Right ventricle myocardium inferior (tissue), 1 donor: ENCODE measurements at regions of chr9 and their contacts with region 1.

Region 1: DNA sequence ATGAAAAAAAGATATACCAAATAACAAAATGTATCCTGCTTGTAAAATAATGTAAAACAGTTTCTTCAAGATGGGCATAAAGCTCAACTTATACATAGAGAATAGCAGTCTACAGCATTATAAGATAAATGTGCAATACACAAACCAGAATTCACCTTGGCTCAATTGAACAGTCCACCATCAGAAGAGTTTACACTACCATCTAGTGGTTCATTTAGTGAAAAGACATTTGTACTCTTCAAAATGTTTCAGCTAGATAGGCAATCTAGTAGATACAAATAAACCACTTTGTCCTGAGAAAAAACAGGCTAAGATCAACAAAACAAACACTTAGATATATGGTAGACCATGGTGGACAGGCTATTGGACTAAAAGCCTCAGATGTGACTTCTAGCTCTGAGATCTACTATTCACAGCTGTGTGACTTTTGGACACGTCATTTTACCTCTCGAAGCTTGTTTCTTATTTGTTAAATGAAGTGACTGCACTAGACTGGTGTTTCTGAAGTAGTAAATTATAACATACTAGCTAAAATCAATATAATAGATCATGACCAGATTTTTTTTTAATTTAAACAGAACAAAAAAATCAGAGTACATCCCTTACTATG is 22.1 kb upstream of the TPD52L3 start:
- DNase-seq: no peak
- ATAC-seq: no peak

Region 2: DNA sequence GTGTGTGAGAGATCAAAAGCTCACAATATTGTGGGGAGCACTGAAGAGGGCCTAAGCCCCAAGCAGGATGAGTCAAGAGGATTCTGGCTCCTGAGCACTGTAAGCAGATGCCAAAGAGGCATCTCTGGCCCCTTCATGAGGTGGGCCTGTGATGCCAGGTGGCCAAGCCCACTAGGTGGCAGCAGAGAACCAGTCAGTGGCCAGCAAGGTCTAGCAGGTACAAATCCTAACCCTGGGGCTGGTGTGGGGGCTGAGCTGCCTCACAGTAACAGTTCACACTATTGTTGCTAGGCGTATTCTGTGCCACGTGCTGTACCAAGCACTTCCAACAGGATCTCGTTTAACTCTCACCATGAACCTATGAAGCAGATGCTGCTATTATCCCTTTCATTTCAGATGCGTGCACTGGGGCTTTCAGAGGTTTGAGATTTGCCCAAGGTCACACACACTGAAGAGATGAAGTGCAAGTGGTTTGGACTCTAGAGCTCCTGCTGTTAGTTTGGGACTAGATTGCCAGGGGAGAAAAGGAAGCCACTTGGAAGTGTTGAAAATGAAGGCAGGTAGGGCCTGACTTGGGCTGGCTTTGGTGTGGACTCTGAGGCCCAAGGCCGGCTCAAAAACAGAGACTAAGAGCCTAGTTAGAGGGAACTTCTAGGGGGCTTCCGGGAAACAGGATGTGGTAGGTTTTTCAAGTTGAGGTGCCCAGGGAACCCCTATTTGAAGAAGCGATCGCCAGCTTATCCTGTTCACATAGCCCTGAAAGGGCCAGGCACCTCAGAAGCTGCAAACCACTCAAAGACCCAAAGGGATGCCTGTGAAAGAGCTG is 419.7 kb before region 1 on chr9:
- intact Hi-C with region 1: loop called (anchors 5 kb)
- DNase-seq: peak; percentile 79
- ATAC-seq: peak; percentile 74

Region 3: GRCh38 chr9:6008169-6008979 is 297.7 kb before region 1 on chr9:
- intact Hi-C with region 1: no loop called
- DNase-seq: peak; percentile 96
- ATAC-seq: peak; percentile 94

Region 4: GRCh38 chr9:6198261-6198660 is 107.8 kb before region 1 on chr9:
- intact Hi-C with region 1: loop called (anchors 1 kb)
- DNase-seq: no peak
- ATAC-seq: no peak

Region 5: GRCh38 chr9:6268830-6269397 is 37.1 kb before region 1 on chr9:
- intact Hi-C with region 1: no loop called
- DNase-seq: no peak
- ATAC-seq: no peak